Ovary (tissue), 10 donors: ENCODE measurements at regions of chr1 and their contacts with region 1.

Region 1: DNA sequence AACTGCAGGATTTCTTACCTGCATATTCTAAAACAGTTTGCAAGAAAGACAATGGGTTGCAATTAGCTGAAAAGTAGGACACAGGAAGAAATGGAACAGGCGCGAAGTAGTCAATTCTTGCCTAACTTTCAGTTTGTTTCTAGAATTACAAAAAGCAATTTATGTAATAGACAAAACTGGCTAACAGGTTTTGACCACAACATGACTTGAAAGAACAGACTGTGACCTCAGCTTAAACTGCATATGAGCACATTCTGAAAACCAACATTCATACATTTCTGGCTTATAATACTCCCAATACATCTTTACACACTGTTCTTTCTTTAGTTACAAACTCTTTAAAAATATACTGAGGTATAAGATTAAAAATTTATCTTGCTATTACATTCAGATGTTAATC is 405.9 kb upstream of the B3GALT2 start:
- DNase-seq: no peak
- H3K4me3 ChIP-seq: no peak overlapping the region
- H3K27ac ChIP-seq: no peak overlapping the region
- H3K4me1 ChIP-seq: peaks cover 6% of the 10 kb centered on the region
- H3K27me3 ChIP-seq: no peaks in the 10 kb centered on the region
- CTCF ChIP-seq: no peak
- EP300 ChIP-seq: no peak
- POLR2A ChIP-seq: no peak

Region 2: DNA sequence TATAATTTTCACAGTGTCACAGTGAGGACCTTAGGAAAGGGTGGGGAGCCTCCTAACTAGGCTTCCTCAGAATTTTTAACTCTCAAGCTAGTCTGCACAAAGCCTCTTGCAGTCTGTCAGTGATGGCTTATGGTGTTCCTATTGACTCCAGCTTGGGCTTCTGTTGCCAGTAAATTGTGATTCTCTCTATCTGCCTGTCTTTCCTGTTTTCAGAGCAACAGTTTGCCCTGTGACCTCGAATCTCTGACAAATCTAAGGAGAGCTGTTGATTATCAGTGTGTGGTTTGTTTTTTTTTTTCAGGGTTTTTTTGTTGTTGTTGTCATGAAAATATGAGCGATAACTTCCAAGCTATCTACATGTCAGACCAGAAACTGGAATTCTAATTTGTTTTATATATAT is 17.3 kb after region 1 on chr1:
- intact Hi-C with region 1: loop called in 1 of 4 experiments (anchors 1 kb)
- DNase-seq: no peak
- H3K4me3 ChIP-seq: no peak overlapping the region
- H3K27ac ChIP-seq: no peak overlapping the region
- H3K4me1 ChIP-seq: no peaks in the 10 kb centered on the region
- H3K27me3 ChIP-seq: no peaks in the 10 kb centered on the region
- CTCF ChIP-seq: no peak
- EP300 ChIP-seq: no peak
- POLR2A ChIP-seq: no peak